Breast epithelium (tissue), 4 donors: ENCODE measurements at regions of chr11 and their contacts with region 1.

Region 1: DNA sequence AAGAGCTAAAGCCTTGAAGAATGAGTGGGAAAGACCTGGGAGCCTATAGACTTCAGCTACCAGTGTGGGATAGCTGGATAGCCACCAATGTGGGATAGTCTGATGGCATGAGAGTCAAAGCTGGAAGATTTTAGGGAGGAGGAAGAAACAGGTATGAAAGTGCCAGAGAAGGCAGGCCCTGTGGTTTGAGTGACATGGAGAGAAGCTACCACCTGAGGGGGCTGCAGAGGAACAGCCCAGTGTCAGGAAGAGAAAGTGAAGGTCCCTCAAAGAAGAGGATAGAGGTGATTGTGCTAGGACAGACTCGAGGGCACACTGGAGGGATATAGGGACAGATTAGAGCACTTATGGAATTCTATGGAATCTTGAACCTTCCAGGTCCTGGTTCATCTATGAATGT is 23.1 kb upstream of the PAX6 start:
- DNase-seq: no peak
- H3K4me3 ChIP-seq: no peak overlapping the region
- H3K27ac ChIP-seq: no peak overlapping the region
- H3K4me1 ChIP-seq: no peaks in the 10 kb centered on the region
- H3K27me3 ChIP-seq: peaks cover 0 to 51% of the 10 kb centered on the region in 2 donors
- CTCF ChIP-seq: no peak
- POLR2A ChIP-seq: no peak

Region 2: DNA sequence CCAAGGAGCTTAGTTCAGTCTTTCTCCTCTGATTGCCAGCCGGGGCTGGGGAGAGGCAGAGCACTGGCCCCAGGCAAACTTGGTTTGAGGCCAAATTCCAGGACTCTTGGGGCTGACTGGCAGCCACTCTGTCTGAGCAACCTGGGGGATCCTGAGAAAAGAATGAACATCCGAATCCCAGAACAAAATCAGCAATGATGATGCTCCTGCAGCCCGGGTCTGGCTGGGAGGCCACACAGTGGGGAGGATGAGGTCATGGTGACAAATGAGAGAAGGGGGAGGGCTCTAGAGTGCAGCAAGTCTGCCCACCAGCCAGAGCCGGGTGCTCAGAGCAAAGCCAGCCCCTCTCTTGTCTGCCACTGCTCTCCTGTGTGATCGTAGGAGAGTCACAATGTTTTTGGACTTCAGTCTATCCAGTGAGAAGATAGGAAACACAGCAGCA is 48.7 kb after region 1 on chr11:
- intact Hi-C with region 1: no loop called
- DNase-seq: no peak
- H3K4me3 ChIP-seq: no peak overlapping the region
- H3K27ac ChIP-seq: no peak overlapping the region
- H3K4me1 ChIP-seq: no peaks in the 10 kb centered on the region
- H3K27me3 ChIP-seq: peaks cover 0 to 13% of the 10 kb centered on the region in 2 donors
- CTCF ChIP-seq: no peak
- POLR2A ChIP-seq: no peak

Region 3: DNA sequence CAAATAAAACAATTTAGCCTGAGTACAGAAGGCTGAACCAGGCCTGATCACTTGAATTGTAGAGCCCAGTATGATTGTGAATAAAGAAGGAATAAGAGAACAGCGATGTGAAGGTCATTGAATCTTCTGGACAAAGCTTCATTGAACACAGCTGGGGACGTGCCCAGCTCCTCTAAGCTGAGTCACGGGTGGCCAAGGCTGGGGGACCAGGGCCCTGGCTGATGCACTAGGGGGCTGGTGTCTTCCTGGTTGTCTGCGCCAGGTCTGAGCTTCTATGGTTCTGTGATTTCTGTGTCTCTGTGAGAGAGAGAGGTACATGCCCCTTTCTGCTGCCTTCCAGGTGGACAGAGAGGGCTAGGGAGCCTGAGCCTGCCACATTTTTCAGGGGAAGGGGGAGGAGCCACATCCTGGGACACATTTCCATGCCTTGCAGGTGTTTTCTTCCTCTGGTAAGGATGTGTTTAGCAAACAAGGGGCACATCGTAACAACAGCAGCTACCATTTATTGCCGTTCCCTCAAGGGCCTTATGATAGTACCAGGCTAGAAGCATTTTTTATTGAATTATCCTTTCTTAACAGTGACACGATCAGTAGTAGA is 1730.7 kb after region 1 on chr11:
- intact Hi-C with region 1: loop called (anchors 10 kb)
- DNase-seq: no peak
- H3K4me3 ChIP-seq: no peak overlapping the region
- H3K27ac ChIP-seq: no peak overlapping the region
- H3K4me1 ChIP-seq: no peaks in the 10 kb centered on the region
- H3K27me3 ChIP-seq: no peaks in the 10 kb centered on the region
- CTCF ChIP-seq: no peak
- POLR2A ChIP-seq: no peak